HepG2 (cell line): ENCODE measurements at regions of chr13 and their contacts with region 1.

Region 1: DNA sequence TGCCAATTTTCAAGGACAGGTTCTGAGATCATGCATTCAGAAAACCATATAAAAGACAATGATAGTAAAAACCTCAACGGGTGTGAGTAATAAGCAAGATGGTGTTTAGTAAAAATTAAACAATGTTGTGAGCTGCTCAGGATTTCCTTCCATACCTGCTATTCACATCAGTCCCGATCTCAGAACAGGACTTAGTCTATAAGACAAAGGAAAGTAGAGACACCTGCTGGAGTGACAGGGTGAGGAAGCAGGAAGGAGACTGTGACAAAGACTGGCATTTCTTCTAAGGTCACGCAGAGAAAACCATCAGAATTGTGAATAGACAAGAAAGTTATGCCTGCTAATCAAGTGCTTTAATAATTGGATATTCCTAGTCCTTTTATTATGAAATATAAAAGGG is 648.0 kb downstream of the DACH1 start:
- DNase-seq: peak; percentile 7
- ATAC-seq: peak; percentile 55; the same call in 1 of the 3 replicates
- H3K4me3 ChIP-seq: no peak overlapping the region
- H3K27ac ChIP-seq: no peak overlapping the region
- H3K4me1 ChIP-seq: no peaks in the 10 kb centered on the region
- H3K27me3 ChIP-seq: peaks cover 0 to 2% of the 10 kb centered on the region in 2 experiments; a peak in 1 of 5 replicates
- CTCF ChIP-seq: peak; percentile 44
- EP300 ChIP-seq: no peak
- POLR2A ChIP-seq: no peak
- RAD21 ChIP-seq: no peak

Region 2: GRCh38 chr13:70623239-70623638 is 595.7 kb before region 1 on chr13:
- CTCF ChIA-PET with region 1: no interaction called
- POLR2A ChIA-PET with region 1: no interaction called
- in situ Hi-C with region 1: no loop called
- intact Hi-C with region 1: loop called (anchors 1 kb)
- DNase-seq: no peak
- ATAC-seq: no peak
- H3K4me3 ChIP-seq: no peak overlapping the region
- H3K27ac ChIP-seq: no peak overlapping the region
- H3K4me1 ChIP-seq: no peaks in the 10 kb centered on the region
- H3K27me3 ChIP-seq: no peaks in the 10 kb centered on the region
- CTCF ChIP-seq: peak; percentile 17
- EP300 ChIP-seq: no peak
- POLR2A ChIP-seq: no peak
- RAD21 ChIP-seq: no peak

Region 3: GRCh38 chr13:70723732-70724131 is 495.2 kb before region 1 on chr13:
- CTCF ChIA-PET with region 1: no interaction called
- POLR2A ChIA-PET with region 1: no interaction called
- in situ Hi-C with region 1: no loop called
- intact Hi-C with region 1: loop called (anchors 1 kb)
- DNase-seq: peak; percentile 5
- ATAC-seq: peak; percentile 50; the same call in 2 of the 3 replicates
- H3K4me3 ChIP-seq: no peak overlapping the region
- H3K27ac ChIP-seq: no peak overlapping the region
- H3K4me1 ChIP-seq: no peaks in the 10 kb centered on the region
- H3K27me3 ChIP-seq: no peaks in the 10 kb centered on the region
- CTCF ChIP-seq: peak; percentile 49
- EP300 ChIP-seq: no peak
- POLR2A ChIP-seq: no peak
- RAD21 ChIP-seq: no peak